Adrenal gland (tissue), 19 donors: ENCODE measurements at regions of chr9 and their contacts with region 1.

Region 1: GRCh38 chr9:136949817-136950655 is 2.0 kb upstream of the LCN12 start:
- DNase-seq: peak; percentile 97 to 99 (median 97)
- H3K4me3 ChIP-seq: peak overlapping the region in 2 of 4 donors; percentile 59 to 82
- H3K27ac ChIP-seq: peak overlapping the region; percentile 4 to 93 (median 83)
- H3K4me1 ChIP-seq: peaks cover 14 to 28% of the 10 kb centered on the region in 2 donors
- H3K27me3 ChIP-seq: no peaks in the 10 kb centered on the region
- CTCF ChIP-seq: peak in 5 of 6 experiments; percentile 12 to 46 (median 30)
- POLR2A ChIP-seq: peak; percentile 71 to 78

Region 2: GRCh38 chr9:137021979-137022619 is 72.1 kb after region 1 on chr9:
- intact Hi-C with region 1: loop called (anchors 5 kb)
- DNase-seq: peak; percentile 62 to 92 (median 90)
- H3K4me3 ChIP-seq: no peak overlapping the region
- H3K27ac ChIP-seq: peak overlapping the region in 1 of 5 donors; percentile 22
- H3K4me1 ChIP-seq: peaks cover 0 to 5% of the 10 kb centered on the region in 2 donors
- H3K27me3 ChIP-seq: no peaks in the 10 kb centered on the region
- CTCF ChIP-seq: no peak
- POLR2A ChIP-seq: no peak

Region 3: DNA sequence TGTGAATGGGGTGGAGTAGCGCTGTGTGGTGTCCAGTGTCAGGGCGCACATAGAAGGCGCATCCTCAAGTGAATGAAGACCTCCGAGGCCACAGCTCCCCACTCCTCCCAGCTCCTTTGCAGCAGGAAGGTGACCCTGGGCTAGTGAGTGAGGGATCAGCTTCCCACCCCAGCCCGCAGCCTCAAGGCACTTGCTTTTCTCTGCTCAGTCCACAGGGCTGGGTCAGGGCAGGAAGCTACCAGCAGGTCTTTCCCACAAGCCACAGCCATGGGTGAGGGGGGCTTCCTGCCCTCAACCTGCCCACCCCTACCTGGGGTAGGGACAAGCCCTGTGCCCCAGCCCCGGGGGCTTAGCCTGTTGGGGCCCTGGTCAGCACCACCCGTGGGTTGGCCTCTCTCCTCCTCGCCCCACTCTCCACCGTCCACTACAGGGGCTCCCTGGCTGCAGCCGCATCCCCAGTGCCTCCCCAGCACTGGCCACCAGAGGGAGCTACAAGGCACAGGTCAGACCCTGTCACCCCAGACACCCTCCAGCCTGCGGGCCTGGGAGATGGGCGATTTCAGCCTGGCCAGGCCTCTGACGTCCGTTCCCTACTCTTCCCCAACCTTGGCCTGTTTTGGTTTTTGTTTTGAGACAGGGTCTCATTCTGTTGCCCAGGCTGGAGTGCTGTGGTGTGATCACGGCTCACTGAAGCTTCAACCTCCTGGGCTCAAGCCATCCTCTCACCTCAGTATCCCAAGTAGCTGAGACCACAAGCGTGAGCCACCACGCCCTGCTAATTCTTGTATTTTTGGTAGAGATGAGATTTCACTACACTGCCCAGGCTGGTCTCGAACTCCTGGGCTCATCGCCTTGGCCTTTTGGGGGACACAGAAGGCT is 79.3 kb after region 1 on chr9:
- intact Hi-C with region 1: loop called (anchors 5 kb)
- DNase-seq: peak; percentile 66 to 89 (median 77)
- H3K4me3 ChIP-seq: peak overlapping the region in 1 of 4 donors; percentile 74
- H3K27ac ChIP-seq: no peak overlapping the region
- H3K4me1 ChIP-seq: peaks cover 9 to 30% of the 10 kb centered on the region in 2 donors
- H3K27me3 ChIP-seq: no peaks in the 10 kb centered on the region
- CTCF ChIP-seq: peak; percentile 73 to 84 (median 81)
- POLR2A ChIP-seq: no peak

Region 4: GRCh38 chr9:137055385-137056364 is 105.6 kb after region 1 on chr9:
- intact Hi-C with region 1: no loop called
- DNase-seq: peak; percentile 76 to 85 (median 80)
- H3K4me3 ChIP-seq: no peak overlapping the region
- H3K27ac ChIP-seq: peak overlapping the region in 1 of 5 donors; percentile 29
- H3K4me1 ChIP-seq: peaks cover 0 to 21% of the 10 kb centered on the region in 2 donors
- H3K27me3 ChIP-seq: peaks cover 37% of the 10 kb centered on the region
- CTCF ChIP-seq: no peak
- POLR2A ChIP-seq: no peak